ENCODE measurements at regions of chr20 and their contacts with region 1.

Region 1: GRCh38 chr20:52312132-52312729 is 120.7 kb upstream of the ZFP64 start:
- DNase-seq: peak in 33 of 35 experiments; percentile 2 to 82 (median 45)
- ATAC-seq: peak; percentile 66 to 77 (median 72)
- H3K4me3 ChIP-seq: no peak overlapping the region
- H3K4me3 Mint-ChIP-seq: no peak overlapping the region
- H3K27ac ChIP-seq: no peak overlapping the region
- H3K27ac Mint-ChIP-seq: peak overlapping the region in 1 of 2 donors; percentile 16
- H3K4me1 ChIP-seq: peaks cover 0 to 1% of the 10 kb centered on the region in 2 experiments
- H3K4me1 Mint-ChIP-seq: peaks cover 21 to 29% (median 27%) of the 10 kb centered on the region in 3 donors
- H3K27me3 ChIP-seq: no peaks in the 10 kb centered on the region
- H3K27me3 Mint-ChIP-seq: peaks cover 0 to 3% of the 10 kb centered on the region in 2 donors

Region 2: GRCh38 chr20:52419205-52419604 is 107.0 kb after region 1 on chr20:
- CTCF ChIA-PET with region 1: no interaction called
- POLR2A ChIA-PET with region 1: no interaction called
- DNase-seq: no peak
- ATAC-seq: no peak
- H3K4me3 ChIP-seq: no peak overlapping the region
- H3K4me3 Mint-ChIP-seq: no peak overlapping the region
- H3K27ac ChIP-seq: no peak overlapping the region
- H3K27ac Mint-ChIP-seq: no peak overlapping the region
- H3K4me1 ChIP-seq: peaks cover 0 to 9% of the 10 kb centered on the region in 2 experiments
- H3K4me1 Mint-ChIP-seq: peaks cover 3 to 10% (median 5%) of the 10 kb centered on the region in 3 donors
- H3K27me3 ChIP-seq: no peaks in the 10 kb centered on the region
- H3K27me3 Mint-ChIP-seq: no peaks in the 10 kb centered on the region

Region 3: DNA sequence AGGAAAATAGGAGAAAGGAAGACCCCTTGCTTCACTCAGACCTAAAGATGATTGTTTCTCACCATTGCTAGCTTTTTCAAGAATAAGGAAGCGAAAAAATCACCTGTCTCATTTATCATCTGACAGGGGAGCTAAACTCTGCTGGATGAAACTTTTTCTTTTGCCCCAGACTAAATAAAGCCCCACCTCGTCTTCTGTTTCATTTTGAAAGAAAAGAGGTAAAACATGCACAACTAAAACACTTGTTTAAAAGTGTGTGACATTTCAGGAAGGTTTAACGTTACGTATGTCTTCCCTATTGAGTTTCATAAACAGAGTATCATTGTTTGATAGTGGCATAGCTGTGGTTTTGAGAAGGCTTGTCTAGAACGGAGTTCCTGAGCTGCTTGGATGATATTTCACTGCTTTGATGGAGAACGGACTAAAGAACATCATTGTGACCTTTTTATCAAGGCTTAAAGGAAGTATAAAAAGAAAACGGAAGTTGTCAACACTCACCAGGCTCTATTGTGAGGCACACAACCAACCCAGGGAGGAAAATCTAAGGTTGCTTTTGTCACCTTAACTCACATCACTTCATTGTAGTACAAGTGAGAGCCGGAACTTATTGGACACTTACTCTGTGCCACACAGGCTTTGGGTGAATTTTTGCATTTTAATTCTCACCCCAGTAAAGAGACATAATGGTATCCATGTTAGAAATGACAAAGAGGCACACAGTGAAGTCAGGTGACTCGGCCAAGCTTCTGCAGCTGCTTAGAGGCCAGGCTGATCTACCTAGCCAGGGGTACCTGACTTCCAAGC is 689.5 kb after region 1 on chr20:
- CTCF ChIA-PET with region 1: interaction called, 4 to 11 read pairs
- POLR2A ChIA-PET with region 1: no interaction called
- DNase-seq: peak in 17 of 35 experiments; percentile 3 to 62 (median 11)
- ATAC-seq: peak; percentile 65 to 84 (median 68)
- H3K4me3 ChIP-seq: peak overlapping the region in 1 of 2 donors; percentile 22
- H3K4me3 Mint-ChIP-seq: peak overlapping the region; percentile 67 to 81 (median 68)
- H3K27ac ChIP-seq: peak overlapping the region; percentile 78
- H3K27ac Mint-ChIP-seq: peak overlapping the region; percentile 95 to 96
- H3K4me1 ChIP-seq: peaks cover 7 to 30% of the 10 kb centered on the region in 2 experiments
- H3K4me1 Mint-ChIP-seq: peaks cover 56 to 85% (median 71%) of the 10 kb centered on the region in 3 donors
- H3K27me3 ChIP-seq: peaks cover 0 to 3% of the 10 kb centered on the region in 2 experiments
- H3K27me3 Mint-ChIP-seq: peaks cover 0 to 7% of the 10 kb centered on the region in 2 donors

Region 4: DNA sequence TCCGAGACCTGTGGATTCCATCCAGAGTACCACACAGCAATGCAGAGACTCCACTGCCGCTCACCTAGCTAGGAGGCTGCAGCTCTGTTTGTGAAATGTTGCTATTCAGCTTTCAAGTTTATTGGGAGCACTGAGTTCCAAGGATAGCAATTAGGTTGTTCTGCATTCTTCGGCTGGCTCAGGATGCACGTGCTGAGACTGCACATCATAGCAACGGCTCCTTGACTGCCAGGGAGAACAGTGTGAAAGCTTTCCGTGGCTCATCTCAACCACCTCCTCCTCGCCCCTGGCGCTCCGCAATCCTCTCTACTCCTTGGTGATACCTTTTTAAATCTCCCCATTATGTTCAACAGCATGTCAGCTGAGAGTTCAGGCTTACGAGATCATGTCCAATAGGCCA is 776.6 kb after region 1 on chr20:
- CTCF ChIA-PET with region 1: no interaction called
- POLR2A ChIA-PET with region 1: interaction called in 1 of 2 experiments, 14 read pairs
- DNase-seq: no peak
- ATAC-seq: no peak
- H3K4me3 ChIP-seq: no peak overlapping the region
- H3K4me3 Mint-ChIP-seq: no peak overlapping the region
- H3K27ac ChIP-seq: no peak overlapping the region
- H3K27ac Mint-ChIP-seq: no peak overlapping the region
- H3K4me1 ChIP-seq: no peaks in the 10 kb centered on the region
- H3K4me1 Mint-ChIP-seq: peaks cover 5 to 39% (median 11%) of the 10 kb centered on the region in 3 donors
- H3K27me3 ChIP-seq: no peaks in the 10 kb centered on the region
- H3K27me3 Mint-ChIP-seq: no peaks in the 10 kb centered on the region

Region 5: GRCh38 chr20:53216856-53217576 is 904.8 kb after region 1 on chr20:
- CTCF ChIA-PET with region 1: interaction called, 5 to 20 read pairs
- POLR2A ChIA-PET with region 1: no interaction called
- DNase-seq: peak; percentile 41 to 87 (median 75)
- ATAC-seq: peak; percentile 82 to 89 (median 86)
- H3K4me3 ChIP-seq: peak overlapping the region in 1 of 2 donors; percentile 17
- H3K4me3 Mint-ChIP-seq: peak overlapping the region; percentile 62 to 64 (median 63)
- H3K27ac ChIP-seq: no peak overlapping the region
- H3K27ac Mint-ChIP-seq: peak overlapping the region; percentile 76 to 80
- H3K4me1 ChIP-seq: peaks cover 0 to 23% of the 10 kb centered on the region in 2 experiments
- H3K4me1 Mint-ChIP-seq: peaks cover 29 to 43% (median 29%) of the 10 kb centered on the region in 3 donors
- H3K27me3 ChIP-seq: peaks cover 0 to 10% of the 10 kb centered on the region in 2 experiments
- H3K27me3 Mint-ChIP-seq: peaks cover 0 to 6% of the 10 kb centered on the region in 2 donors